ENCODE measurements at regions of chr9 and their contacts with region 1.

Region 1: DNA sequence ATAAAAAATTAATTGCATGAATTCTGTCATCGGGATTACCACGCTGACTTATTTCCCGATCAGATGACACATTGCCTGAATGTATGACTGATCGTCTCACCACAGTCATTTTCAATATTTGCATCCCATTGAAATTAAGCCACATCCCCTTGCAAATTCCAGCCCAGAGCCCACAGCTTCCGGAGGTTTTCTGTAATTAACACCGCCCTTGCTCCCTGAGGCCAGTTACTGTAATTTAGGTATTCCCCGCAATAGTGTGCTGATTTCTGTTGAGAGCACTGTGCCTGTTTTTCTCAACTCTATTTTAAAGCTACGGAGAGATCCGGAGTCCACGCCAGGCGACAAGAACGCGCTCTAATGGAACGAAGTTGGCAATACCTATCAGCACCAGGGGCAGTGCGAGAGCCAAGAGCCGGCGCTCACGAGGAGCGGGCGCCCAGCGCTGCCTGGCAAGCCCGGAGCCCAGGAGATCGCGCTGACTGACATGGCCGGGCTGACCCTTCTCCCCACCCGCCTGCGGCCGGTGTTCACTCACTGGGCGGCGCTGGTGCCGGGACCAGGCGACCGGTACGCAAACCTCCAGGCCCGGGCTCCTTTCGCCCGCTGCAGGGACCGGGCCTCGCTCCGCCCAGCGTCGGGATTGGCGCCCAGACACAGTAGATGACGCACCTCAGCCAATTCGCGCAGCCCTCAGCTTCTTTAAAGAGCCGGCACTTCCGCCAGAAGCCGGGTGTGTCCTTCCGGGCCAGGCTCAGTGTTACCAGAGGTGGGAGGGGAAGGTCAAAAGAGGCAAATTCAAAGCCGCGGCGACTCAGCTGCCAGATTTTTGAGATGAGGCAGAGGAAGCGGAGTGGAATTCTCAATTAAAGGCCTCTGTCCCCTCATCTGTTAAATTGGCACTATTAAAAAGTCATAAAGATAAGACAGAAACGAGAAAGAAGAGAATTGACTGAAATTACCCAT is at the start of gene PLGRKT:
- DNase-seq: peak; percentile 94
- ATAC-seq: peak; percentile 87
- H3K4me3 ChIP-seq: peak within 1 kb of the TSS; percentile 60 to 96 (median 76)
- H3K4me3 Mint-ChIP-seq: peak within 1 kb of the TSS; percentile 95
- H3K27ac ChIP-seq: peak within 1 kb of the TSS; percentile 85 to 94
- H3K27ac Mint-ChIP-seq: peak within 1 kb of the TSS; percentile 98
- H3K4me1 ChIP-seq: peaks cover 22 to 23% of the 10 kb centered on the region in 2 donors
- H3K4me1 Mint-ChIP-seq: peaks cover 45% of the 10 kb centered on the region
- H3K27me3 ChIP-seq: no peaks in the 10 kb centered on the region
- H3K27me3 Mint-ChIP-seq: no peaks in the 10 kb centered on the region
- CTCF ChIP-seq: peak; percentile 17
- total RNA-seq, gene PLGRKT: 11.0 and 12.3 TPM in 2 replicates

Region 2: DNA sequence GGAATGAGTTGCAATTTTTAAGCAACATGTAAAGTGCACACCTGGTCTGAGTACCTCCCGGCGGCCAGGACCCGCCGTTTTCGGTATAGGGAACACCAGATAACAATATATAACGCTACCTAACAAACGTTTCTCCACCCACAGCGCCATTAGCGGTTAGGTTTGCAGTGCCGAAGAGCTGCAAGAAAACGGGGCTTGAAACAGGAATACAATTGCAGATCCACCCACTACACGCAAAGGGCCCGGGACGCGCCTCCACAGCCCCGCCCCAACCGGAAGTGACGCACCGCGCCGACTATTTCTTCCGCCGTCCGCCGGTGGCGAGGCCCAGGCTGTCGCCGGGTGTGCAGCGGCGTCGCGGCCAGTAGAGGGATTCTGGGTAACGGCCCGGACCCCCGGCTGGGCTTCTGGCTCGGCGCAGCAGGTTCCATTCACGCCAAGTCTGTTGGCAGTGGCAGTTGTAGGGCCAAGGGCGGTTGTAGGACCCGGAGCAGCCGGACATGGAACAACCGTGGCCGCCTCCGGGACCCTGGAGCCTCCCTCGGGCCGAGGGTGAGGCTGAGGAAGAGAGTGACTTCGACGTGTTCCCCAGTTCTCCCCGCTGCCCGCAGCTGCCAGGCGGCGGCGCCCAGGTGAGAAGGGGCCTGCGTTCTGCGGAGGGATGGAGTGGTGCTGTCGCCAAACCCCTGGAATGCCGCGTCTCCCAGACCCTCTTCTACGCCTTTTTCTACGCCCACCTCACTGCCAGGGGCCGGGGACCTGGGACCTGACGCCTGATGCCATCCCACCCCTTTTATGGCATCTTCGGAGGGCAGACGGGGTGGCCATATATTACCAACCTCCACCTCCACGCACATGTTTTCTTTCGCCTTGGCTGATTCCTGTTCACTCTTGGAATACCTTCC is 758.0 kb before region 1 on chr9 and contains the start of gene CDC37L1:
- CTCF ChIA-PET with region 1: no interaction called
- POLR2A ChIA-PET with region 1: no interaction called
- intact Hi-C with region 1: loop called (anchors 5 kb)
- DNase-seq: peak; percentile 98
- ATAC-seq: peak; percentile 95
- H3K4me3 ChIP-seq: peak within 1 kb of the TSS; percentile 58 to 97 (median 72)
- H3K4me3 Mint-ChIP-seq: no peak within 1 kb of the TSS
- H3K27ac ChIP-seq: peak within 1 kb of the TSS; percentile 89 to 93
- H3K27ac Mint-ChIP-seq: no peak within 1 kb of the TSS
- H3K4me1 ChIP-seq: peaks cover 17 to 20% of the 10 kb centered on the region in 2 donors
- H3K4me1 Mint-ChIP-seq: peaks cover 3% of the 10 kb centered on the region
- H3K27me3 ChIP-seq: no peaks in the 10 kb centered on the region
- H3K27me3 Mint-ChIP-seq: no peaks in the 10 kb centered on the region
- CTCF ChIP-seq: peak; percentile 72
- total RNA-seq, gene CDC37L1: 16.0 and 19.3 TPM in 2 replicates

Region 3: DNA sequence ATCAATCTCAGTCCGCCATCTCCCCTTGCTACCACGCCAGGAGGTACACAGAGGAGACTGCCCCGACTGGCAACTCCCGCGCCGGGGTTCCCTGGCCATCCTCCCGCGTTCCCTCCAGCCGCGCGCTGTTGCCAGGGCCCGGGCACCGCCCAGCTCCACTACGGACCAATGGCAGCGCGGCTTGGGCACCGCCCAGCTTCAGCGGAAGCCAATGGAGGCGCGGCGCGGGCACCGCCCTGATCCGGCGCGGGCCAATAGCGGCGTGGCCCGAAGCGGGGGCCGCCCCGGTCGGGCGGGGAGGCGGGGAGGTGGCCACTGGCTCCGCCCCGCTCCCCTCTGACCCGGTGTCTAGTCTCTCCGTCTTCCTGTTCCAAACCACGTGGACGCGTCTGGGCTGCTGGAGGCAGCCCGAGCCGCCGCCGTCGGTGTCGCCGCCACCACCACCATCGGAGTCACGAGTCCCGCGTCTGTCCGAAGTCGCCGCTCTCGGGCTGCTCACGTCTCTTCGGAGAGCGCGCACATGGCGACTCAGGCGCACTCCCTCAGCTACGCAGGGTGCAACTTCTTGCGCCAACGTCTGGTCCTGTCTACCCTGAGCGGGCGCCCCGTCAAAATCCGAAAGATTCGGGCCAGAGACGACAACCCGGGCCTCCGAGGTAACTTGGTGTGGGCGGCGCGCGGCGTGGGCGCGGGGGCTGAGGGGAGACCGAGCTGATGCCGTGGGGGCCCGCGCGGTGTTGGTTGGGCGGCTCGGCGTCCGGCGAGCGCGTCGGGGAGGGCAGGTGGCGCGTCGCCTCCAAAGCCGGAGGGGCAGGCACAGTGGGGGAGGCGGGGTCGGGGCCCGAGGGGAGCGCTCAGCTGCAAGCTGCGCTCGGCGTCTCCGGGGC is 644.7 kb before region 1 on chr9 and contains the start of gene RCL1:
- CTCF ChIA-PET with region 1: interaction called, 3 read pairs
- POLR2A ChIA-PET with region 1: no interaction called
- intact Hi-C with region 1: loop called (anchors 2 kb)
- DNase-seq: peak; percentile 97
- ATAC-seq: peak; percentile 91
- H3K4me3 ChIP-seq: peak within 1 kb of the TSS; percentile 81 to 96 (median 94)
- H3K4me3 Mint-ChIP-seq: peak within 1 kb of the TSS; percentile 98
- H3K27ac ChIP-seq: peak within 1 kb of the TSS; percentile 89 to 97
- H3K27ac Mint-ChIP-seq: peak within 1 kb of the TSS; percentile 97
- H3K4me1 ChIP-seq: peaks cover 22 to 30% of the 10 kb centered on the region in 2 donors
- H3K4me1 Mint-ChIP-seq: peaks cover 36% of the 10 kb centered on the region
- H3K27me3 ChIP-seq: no peaks in the 10 kb centered on the region
- H3K27me3 Mint-ChIP-seq: peaks cover 1% of the 10 kb centered on the region
- CTCF ChIP-seq: no peak
- total RNA-seq, gene RCL1: 21.7 and 29.6 TPM in 2 replicates

Region 4: DNA sequence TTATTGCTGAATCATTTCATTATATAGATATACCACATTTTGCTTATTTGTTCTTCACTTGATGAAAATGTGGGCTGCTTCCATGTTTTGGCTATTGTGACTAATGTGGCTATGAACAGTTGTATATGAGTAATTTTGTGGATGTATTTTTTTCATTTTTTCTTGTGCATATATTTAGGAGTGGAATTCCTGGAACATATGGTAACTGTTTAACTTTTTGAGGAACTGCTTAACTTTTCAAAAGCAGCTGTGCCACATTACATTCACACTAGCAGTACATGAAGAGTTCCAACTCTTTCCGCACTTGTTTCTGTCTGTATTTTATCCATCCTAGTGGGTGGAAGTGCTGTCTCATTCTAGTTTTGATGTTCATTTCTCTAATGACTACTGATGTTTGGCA is 384.7 kb before region 1 on chr9:
- CTCF ChIA-PET with region 1: no interaction called
- POLR2A ChIA-PET with region 1: no interaction called
- intact Hi-C with region 1: no loop called
- DNase-seq: no peak
- ATAC-seq: no peak
- H3K4me3 ChIP-seq: no peak overlapping the region
- H3K4me3 Mint-ChIP-seq: no peak overlapping the region
- H3K27ac ChIP-seq: no peak overlapping the region
- H3K27ac Mint-ChIP-seq: no peak overlapping the region
- H3K4me1 ChIP-seq: no peaks in the 10 kb centered on the region
- H3K4me1 Mint-ChIP-seq: no peaks in the 10 kb centered on the region
- H3K27me3 ChIP-seq: no peaks in the 10 kb centered on the region
- H3K27me3 Mint-ChIP-seq: no peaks in the 10 kb centered on the region
- CTCF ChIP-seq: no peak

Region 5: DNA sequence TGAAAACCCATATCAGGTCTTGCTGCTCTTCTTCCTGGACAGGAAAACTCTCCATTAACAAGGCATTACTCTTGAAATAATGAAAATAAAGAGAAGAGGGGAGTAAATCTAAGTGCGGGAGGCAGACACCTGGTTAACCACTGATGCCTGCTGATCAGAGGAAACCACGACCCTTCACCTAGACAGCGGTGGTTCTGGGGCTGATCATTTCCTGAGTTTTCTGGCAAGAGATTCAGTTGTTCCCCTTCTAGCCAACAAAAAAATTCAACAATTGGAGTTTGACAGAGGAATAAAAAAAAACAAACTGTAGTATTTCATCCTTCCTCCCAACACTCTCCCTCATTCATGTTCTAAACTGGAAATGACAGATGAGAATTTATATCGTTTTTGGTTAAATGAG is 136.0 kb before region 1 on chr9:
- CTCF ChIA-PET with region 1: interaction called, 4 read pairs
- POLR2A ChIA-PET with region 1: no interaction called
- intact Hi-C with region 1: loop called (anchors 5 kb)
- DNase-seq: no peak
- ATAC-seq: no peak
- H3K4me3 ChIP-seq: no peak overlapping the region
- H3K4me3 Mint-ChIP-seq: no peak overlapping the region
- H3K27ac ChIP-seq: no peak overlapping the region
- H3K27ac Mint-ChIP-seq: no peak overlapping the region
- H3K4me1 ChIP-seq: peaks cover 5 to 6% of the 10 kb centered on the region in 2 donors
- H3K4me1 Mint-ChIP-seq: peaks cover 11% of the 10 kb centered on the region
- H3K27me3 ChIP-seq: no peaks in the 10 kb centered on the region
- H3K27me3 Mint-ChIP-seq: no peaks in the 10 kb centered on the region
- CTCF ChIP-seq: no peak

Region 6: GRCh38 chr9:5402217-5402616 is 35.3 kb before region 1 on chr9:
- CTCF ChIA-PET with region 1: no interaction called
- POLR2A ChIA-PET with region 1: no interaction called
- intact Hi-C with region 1: no loop called
- DNase-seq: no peak
- ATAC-seq: no peak
- H3K4me3 ChIP-seq: no peak overlapping the region
- H3K4me3 Mint-ChIP-seq: no peak overlapping the region
- H3K27ac ChIP-seq: no peak overlapping the region
- H3K27ac Mint-ChIP-seq: no peak overlapping the region
- H3K4me1 ChIP-seq: peaks cover 0 to 5% of the 10 kb centered on the region in 2 donors
- H3K4me1 Mint-ChIP-seq: peaks cover 5% of the 10 kb centered on the region
- H3K27me3 ChIP-seq: no peaks in the 10 kb centered on the region
- H3K27me3 Mint-ChIP-seq: no peaks in the 10 kb centered on the region
- CTCF ChIP-seq: no peak

Region 7: GRCh38 chr9:5450359-5451091 is 13.0 kb after region 1 on chr9 and contains the start of gene CD274:
- CTCF ChIA-PET with region 1: interaction called, 54 read pairs
- POLR2A ChIA-PET with region 1: interaction called, 28 read pairs
- intact Hi-C with region 1: loop called (anchors 1 kb)
- DNase-seq: peak; percentile 85
- ATAC-seq: peak; percentile 91
- H3K4me3 ChIP-seq: peak within 1 kb of the TSS; percentile 75 to 93 (median 81)
- H3K4me3 Mint-ChIP-seq: peak within 1 kb of the TSS; percentile 83
- H3K27ac ChIP-seq: peak within 1 kb of the TSS; percentile 72 to 83
- H3K27ac Mint-ChIP-seq: peak within 1 kb of the TSS; percentile 94
- H3K4me1 ChIP-seq: peaks cover 21 to 30% of the 10 kb centered on the region in 2 donors
- H3K4me1 Mint-ChIP-seq: peaks cover 49% of the 10 kb centered on the region
- H3K27me3 ChIP-seq: no peaks in the 10 kb centered on the region
- H3K27me3 Mint-ChIP-seq: no peaks in the 10 kb centered on the region
- CTCF ChIP-seq: peak; percentile 57
- total RNA-seq, gene CD274: 5.2 and 7.0 TPM in 2 replicates

Region 8: GRCh38 chr9:5628530-5629311 is 191.2 kb after region 1 on chr9 and contains the start of gene RIC1:
- CTCF ChIA-PET with region 1: interaction called, 7 read pairs
- POLR2A ChIA-PET with region 1: interaction called, 25 read pairs
- intact Hi-C with region 1: loop called (anchors 1 kb)
- DNase-seq: peak; percentile 96
- ATAC-seq: peak; percentile 79
- H3K4me3 ChIP-seq: peak within 1 kb of the TSS; percentile 82 to 99 (median 92)
- H3K4me3 Mint-ChIP-seq: peak within 1 kb of the TSS; percentile 98
- H3K27ac ChIP-seq: peak within 1 kb of the TSS; percentile 85 to 93
- H3K27ac Mint-ChIP-seq: peak within 1 kb of the TSS; percentile 99
- H3K4me1 ChIP-seq: peaks cover 52 to 55% of the 10 kb centered on the region in 2 donors
- H3K4me1 Mint-ChIP-seq: peaks cover 59% of the 10 kb centered on the region
- H3K27me3 ChIP-seq: no peaks in the 10 kb centered on the region
- H3K27me3 Mint-ChIP-seq: no peaks in the 10 kb centered on the region
- CTCF ChIP-seq: no peak
- total RNA-seq, gene RIC1: 58.8 and 58.9 TPM in 2 replicates

Region 9: DNA sequence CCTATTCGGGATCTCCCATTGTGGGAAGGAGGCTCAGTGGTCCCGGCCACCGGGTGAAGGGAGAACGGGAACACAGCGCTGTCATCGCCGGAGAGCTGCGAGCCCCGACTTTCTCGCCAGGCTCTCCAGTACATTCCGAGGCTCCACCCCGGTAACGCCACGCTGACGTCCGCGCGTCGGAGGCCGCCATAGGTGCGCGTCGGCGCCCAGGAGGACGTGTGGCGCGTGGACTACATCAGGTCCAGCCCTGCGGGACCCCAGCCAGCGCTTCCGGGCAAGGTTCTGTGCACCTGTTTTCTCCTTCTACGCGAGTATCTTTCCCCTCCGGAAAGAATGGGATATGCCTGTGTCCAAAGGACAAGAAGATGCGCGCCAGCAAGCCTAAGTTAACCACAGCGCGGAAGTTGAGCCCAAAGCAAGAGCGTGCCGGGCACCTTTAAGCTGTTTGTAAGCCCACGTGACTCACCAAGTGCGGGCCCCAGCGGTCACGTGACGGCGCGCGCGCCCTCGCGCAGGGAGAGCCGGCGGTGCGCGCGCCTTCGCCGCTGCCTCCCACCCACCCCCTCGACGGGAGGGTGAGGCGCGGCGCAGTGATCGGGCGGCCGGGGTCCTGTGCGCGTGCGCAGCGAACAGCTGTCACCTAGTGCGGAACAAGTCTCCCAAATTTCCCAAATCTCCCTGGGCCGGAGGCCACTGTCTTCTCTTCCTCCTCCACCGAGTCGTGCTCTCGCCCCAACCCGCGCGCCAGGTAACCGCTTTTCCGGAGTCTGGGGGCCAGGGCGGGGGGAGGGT is 1320.1 kb after region 1 on chr9 and contains the start of gene KDM4C:
- CTCF ChIA-PET with region 1: no interaction called
- POLR2A ChIA-PET with region 1: no interaction called
- intact Hi-C with region 1: loop called (anchors 5 kb)
- DNase-seq: peak; percentile 99
- ATAC-seq: peak; percentile 78
- H3K4me3 ChIP-seq: peak within 1 kb of the TSS; percentile 74 to 98 (median 96)
- H3K4me3 Mint-ChIP-seq: peak within 1 kb of the TSS; percentile 100
- H3K27ac ChIP-seq: peak within 1 kb of the TSS; percentile 94 to 100
- H3K27ac Mint-ChIP-seq: peak within 1 kb of the TSS; percentile 100
- H3K4me1 ChIP-seq: peaks cover 29 to 35% of the 10 kb centered on the region in 2 donors
- H3K4me1 Mint-ChIP-seq: peaks cover 32% of the 10 kb centered on the region
- H3K27me3 ChIP-seq: no peaks in the 10 kb centered on the region
- H3K27me3 Mint-ChIP-seq: no peaks in the 10 kb centered on the region
- CTCF ChIP-seq: no peak
- total RNA-seq, gene KDM4C: 141 and 155 TPM in 2 replicates

Measured in B cell (primary cell).